PC-3 (cell line): ENCODE measurements at regions of chr4 and their contacts with region 1.

Region 1: DNA sequence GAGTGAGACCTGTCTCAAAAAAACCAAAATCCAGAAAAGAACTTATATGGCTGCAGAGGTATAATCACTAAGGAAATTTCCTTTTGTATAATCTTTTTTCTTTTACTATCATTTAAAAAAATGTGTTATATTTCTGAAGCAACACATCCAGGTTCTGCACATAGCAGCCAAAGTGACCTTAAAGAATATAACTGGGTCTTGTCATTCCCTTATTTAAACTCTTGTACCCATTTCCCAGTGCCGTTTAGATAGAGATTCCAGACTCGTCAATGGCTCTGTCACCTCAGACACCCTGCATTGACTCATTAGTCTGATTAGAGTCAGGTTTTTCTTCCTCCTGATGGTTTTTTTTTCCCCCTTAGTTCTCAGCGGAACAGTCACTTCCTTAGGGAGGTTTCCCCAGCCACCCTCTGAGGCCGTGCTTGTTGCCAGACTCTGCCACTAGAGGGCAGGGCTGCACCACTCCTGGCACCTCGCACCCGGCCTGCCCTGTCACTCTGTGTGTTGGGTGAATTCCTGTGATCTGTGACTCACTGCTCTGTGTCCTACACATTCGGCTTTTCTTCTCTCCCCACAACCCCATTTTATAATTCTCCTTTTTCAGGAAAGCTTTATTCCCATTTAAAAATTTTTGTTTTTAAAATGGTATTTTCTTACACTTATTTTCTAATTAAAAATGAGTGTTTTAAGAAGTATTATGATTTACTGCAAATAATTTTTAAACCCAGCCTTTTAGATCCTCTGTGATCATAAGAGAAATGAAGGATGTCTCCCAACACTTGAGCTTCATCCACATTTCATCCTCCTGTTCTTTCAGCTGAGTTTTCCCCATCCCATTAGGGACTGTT is 32.1 kb downstream of the HTT start:
- DNase-seq: peak; percentile 90
- ATAC-seq: peak; percentile 97
- H3K4me3 ChIP-seq: no peak overlapping the region
- H3K27ac ChIP-seq: no peak overlapping the region
- H3K4me1 ChIP-seq: peaks cover 13% of the 10 kb centered on the region
- H3K27me3 ChIP-seq: no peaks in the 10 kb centered on the region
- CTCF ChIP-seq: peak; percentile 90

Region 2: GRCh38 chr4:2825740-2826139 is 280.8 kb before region 1 on chr4:
- CTCF ChIA-PET with region 1: no interaction called
- POLR2A ChIA-PET with region 1: no interaction called
- intact Hi-C with region 1: no loop called
- DNase-seq: no peak
- ATAC-seq: no peak
- H3K4me3 ChIP-seq: no peak overlapping the region
- H3K27ac ChIP-seq: no peak overlapping the region
- H3K4me1 ChIP-seq: no peaks in the 10 kb centered on the region
- H3K27me3 ChIP-seq: no peaks in the 10 kb centered on the region
- CTCF ChIP-seq: no peak

Region 3: DNA sequence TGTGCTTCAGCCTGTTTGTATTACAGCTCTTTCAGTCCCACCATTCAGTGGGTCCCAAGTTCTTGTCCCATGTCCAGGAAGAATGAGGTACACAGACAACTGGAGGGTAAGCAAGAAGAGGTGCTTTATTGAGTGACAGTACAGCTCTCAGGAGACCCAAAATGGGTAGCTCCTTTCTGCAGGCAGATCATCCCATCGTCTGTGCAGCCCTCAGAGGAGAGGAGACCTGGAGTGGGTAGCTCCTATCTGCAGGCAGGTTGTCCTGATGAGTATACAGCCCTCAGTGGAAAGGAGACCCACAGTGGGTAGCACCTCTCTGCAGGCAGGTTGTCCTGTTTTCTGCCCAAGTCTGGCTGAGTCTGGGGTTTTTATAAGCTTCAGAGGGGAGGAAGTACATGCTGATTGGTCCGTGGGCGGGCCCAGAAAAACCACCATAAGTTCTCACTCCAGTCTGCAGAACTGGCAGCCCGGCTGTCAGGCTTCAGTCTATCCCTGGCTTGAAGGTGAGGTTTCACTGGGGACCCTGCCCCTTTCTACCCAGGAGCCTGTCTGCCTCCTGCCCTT is 125.2 kb before region 1 on chr4:
- CTCF ChIA-PET with region 1: no interaction called
- POLR2A ChIA-PET with region 1: no interaction called
- intact Hi-C with region 1: no loop called
- DNase-seq: no peak
- ATAC-seq: no peak
- H3K4me3 ChIP-seq: no peak overlapping the region
- H3K27ac ChIP-seq: no peak overlapping the region
- H3K4me1 ChIP-seq: peaks cover 18% of the 10 kb centered on the region
- H3K27me3 ChIP-seq: no peaks in the 10 kb centered on the region
- CTCF ChIP-seq: no peak

Region 4: GRCh38 chr4:3136453-3136852 is 29.9 kb after region 1 on chr4:
- CTCF ChIA-PET with region 1: no interaction called
- POLR2A ChIA-PET with region 1: no interaction called
- intact Hi-C with region 1: loop called (anchors 1 kb)
- DNase-seq: peak; percentile 26
- ATAC-seq: no peak
- H3K4me3 ChIP-seq: no peak overlapping the region
- H3K27ac ChIP-seq: no peak overlapping the region
- H3K4me1 ChIP-seq: no peaks in the 10 kb centered on the region
- H3K27me3 ChIP-seq: no peaks in the 10 kb centered on the region
- CTCF ChIP-seq: peak; percentile 48; the same call in 1 of the 2 replicates

Region 5: DNA sequence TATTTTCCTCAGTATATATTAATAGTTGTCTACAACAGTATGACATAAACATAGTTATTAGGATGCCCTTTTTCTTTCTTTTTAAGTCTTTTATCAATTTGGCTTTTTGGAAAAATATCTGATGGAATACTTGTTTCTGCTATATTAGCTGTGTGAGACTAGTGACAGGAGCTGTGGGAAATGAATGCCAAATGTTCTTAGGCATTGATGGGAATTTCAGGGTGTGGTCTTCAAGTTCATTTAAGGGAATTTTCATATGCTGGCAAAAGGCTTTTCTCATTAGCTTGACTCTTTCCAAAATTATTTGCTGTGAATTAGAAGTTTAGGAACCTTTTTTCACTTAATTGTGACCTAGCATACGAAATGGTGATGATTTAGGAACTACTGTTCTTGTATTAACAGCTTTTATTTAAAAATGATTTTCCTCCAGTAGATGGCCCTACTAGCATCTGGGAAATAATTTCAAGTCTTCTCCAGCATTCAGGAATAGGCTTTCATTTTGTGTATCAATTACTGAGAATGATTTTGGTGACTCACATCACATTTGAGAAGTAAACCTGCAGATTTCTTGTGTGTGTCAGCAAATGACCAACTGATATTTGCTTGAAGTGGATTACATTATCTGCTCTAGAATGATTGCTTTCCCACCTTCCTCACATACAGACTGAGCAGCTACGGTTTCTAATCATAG is 38.8 kb after region 1 on chr4:
- CTCF ChIA-PET with region 1: no interaction called
- POLR2A ChIA-PET with region 1: no interaction called
- intact Hi-C with region 1: loop called (anchors 2 kb)
- DNase-seq: peak; percentile 29
- ATAC-seq: no peak
- H3K4me3 ChIP-seq: no peak overlapping the region
- H3K27ac ChIP-seq: no peak overlapping the region
- H3K4me1 ChIP-seq: no peaks in the 10 kb centered on the region
- H3K27me3 ChIP-seq: no peaks in the 10 kb centered on the region
- CTCF ChIP-seq: peak; percentile 41